ENCODE measurements at regions of chr2 and their contacts with region 1.

Region 1: DNA sequence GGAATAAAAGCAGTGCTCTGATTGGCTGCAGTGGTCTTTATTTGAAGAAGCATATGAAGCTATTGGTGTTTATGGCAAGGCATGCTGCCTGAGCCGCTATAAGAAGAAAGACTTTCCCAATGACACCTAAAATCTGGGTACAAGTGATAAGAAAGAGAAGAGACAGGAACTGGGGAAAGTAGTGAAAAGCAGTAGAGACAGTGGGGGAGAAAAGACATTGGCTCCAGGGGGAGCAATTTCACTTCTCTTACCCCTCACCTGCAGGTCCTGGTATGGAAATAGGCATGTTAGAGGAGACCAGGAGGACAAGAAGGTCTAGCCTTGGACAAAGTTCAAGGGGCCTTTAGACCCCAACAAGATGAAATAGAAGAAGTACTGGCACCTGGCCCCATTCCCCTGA is 47.1 kb downstream of the PLCL1 start:
- DNase-seq: peak; percentile 52
- H3K4me3 Mint-ChIP-seq: no peak overlapping the region
- H3K27ac Mint-ChIP-seq: no peak overlapping the region
- H3K4me1 Mint-ChIP-seq: peaks cover 89% of the 10 kb centered on the region
- H3K27me3 Mint-ChIP-seq: no peaks in the 10 kb centered on the region

Region 2: GRCh38 chr2:197740200-197740599 is 111.3 kb before region 1 on chr2:
- CTCF ChIA-PET with region 1: no interaction called
- intact Hi-C with region 1: no loop called
- DNase-seq: no peak
- H3K4me3 Mint-ChIP-seq: no peak overlapping the region
- H3K27ac Mint-ChIP-seq: no peak overlapping the region
- H3K4me1 Mint-ChIP-seq: no peaks in the 10 kb centered on the region
- H3K27me3 Mint-ChIP-seq: peaks cover 6% of the 10 kb centered on the region

Region 3: GRCh38 chr2:197804049-197804757 is 47.2 kb before region 1 on chr2 and contains the start of gene PLCL1:
- CTCF ChIA-PET with region 1: interaction called, 5 read pairs
- intact Hi-C with region 1: loop called (anchors 1 kb)
- DNase-seq: peak; percentile 96
- H3K4me3 Mint-ChIP-seq: peak within 1 kb of the TSS; percentile 94
- H3K27ac Mint-ChIP-seq: peak within 1 kb of the TSS; percentile 75
- H3K4me1 Mint-ChIP-seq: peaks cover 43% of the 10 kb centered on the region
- H3K27me3 Mint-ChIP-seq: no peaks in the 10 kb centered on the region
- total RNA-seq, gene PLCL1: 3.3 to 3.5 TPM

Region 4: DNA sequence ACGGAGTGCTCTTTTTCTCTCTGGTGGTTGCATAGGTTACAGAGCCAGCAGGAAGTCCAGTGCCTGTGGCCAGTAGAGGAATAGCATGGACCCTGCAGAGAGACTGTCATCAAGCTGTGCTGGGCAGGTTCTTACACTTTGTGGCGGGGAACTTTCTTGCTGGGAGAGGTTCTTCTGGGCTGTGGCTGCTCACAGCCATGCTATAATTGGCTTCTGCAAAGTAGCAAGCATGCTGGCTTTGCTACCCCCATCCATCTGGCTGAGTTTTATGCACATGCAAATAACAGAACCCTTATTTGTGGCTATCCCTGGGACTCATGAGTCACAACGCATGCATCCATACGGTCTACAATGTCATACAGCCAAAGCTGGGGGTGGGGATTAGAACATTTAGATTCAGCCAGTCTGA is 21.8 kb after region 1 on chr2:
- CTCF ChIA-PET with region 1: interaction called, 13 read pairs
- intact Hi-C with region 1: loop called (anchors 1 kb)
- DNase-seq: no peak
- H3K4me3 Mint-ChIP-seq: no peak overlapping the region
- H3K27ac Mint-ChIP-seq: no peak overlapping the region
- H3K4me1 Mint-ChIP-seq: peaks cover 65% of the 10 kb centered on the region
- H3K27me3 Mint-ChIP-seq: no peaks in the 10 kb centered on the region

Region 5: GRCh38 chr2:197986977-197987376 is 135.5 kb after region 1 on chr2:
- CTCF ChIA-PET with region 1: interaction called, 6 read pairs
- intact Hi-C with region 1: loop called (anchors 1 kb)
- DNase-seq: no peak
- H3K4me3 Mint-ChIP-seq: no peak overlapping the region
- H3K27ac Mint-ChIP-seq: no peak overlapping the region
- H3K4me1 Mint-ChIP-seq: peaks cover 35% of the 10 kb centered on the region
- H3K27me3 Mint-ChIP-seq: no peaks in the 10 kb centered on the region

Region 6: DNA sequence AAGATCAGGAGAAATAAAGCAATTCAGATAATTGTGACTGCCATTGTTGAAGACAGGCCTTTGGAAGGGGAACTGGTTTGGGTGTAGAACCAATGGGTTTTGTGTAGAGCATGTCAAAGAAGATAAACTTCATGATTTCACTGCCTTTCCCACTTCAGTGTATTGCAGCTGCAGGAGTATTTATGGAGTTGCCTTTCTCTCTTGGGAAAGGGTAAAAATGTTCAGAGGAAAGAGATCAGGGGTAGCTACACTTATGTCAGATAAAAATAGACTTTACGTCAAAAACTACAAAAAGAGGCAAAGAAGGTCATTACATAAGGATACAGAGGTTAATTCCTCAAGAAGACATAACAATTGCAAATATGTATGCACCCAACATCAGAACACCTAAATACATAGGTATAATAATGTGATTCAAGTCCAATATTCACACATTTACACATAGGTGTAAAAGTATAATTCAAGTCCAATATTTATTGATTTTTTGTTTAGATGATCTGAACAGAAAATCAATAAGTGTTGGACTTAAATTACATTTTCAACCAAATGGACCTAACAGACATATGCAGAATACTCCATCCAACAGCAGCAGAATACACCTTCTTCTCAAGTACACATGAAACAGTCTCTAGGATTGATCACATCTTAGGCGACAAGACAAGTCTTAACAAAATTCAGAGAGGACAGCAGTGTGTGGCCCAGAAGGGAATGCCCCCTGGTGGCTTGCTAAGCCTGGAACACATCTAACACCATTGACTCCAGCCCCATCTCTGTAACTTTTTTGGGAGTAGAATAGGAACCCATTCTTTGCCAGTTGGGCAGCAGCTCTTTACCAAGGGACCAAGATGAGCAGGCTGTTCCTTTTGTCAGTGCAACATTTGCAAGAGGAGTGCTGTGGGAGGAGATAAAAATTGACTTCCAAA is 202.6 kb after region 1 on chr2:
- CTCF ChIA-PET with region 1: interaction called, 10 read pairs
- intact Hi-C with region 1: loop called (anchors 1 kb)
- DNase-seq: peak; percentile 71
- H3K4me3 Mint-ChIP-seq: no peak overlapping the region
- H3K27ac Mint-ChIP-seq: no peak overlapping the region
- H3K4me1 Mint-ChIP-seq: peaks cover 27% of the 10 kb centered on the region
- H3K27me3 Mint-ChIP-seq: no peaks in the 10 kb centered on the region

Region 7: DNA sequence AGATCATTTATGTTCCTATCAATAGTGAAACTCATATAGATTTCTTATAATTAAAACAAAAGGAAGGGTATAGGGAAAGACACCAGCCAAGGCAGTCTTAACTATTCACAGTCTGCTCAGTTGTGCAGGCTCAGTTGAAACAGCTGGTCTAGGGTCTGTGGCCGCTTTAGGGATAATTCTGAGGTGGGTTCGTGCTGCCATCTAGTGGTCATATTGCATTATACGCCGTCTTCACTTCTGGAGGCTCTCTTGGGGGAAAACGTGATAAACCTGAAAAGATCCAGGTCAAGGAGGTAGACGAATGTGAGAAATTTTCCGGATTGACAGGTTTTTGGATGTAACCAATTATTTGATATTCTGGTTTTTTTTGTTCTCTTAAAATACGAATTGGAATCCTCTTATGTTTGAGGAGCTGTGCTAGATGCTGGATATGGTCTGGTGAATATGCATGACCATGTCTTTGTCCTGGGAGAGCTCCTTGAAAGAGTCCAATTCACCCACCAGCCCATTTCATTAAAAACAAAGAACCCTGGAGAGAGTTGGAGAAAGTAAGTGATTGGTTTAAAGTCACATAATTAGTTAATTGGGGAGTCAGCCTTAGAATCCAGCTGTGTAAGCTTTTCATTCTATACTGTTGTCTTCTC is 445.3 kb after region 1 on chr2:
- CTCF ChIA-PET with region 1: no interaction called
- intact Hi-C with region 1: loop called (anchors 2 kb)
- DNase-seq: peak; percentile 73
- H3K4me3 Mint-ChIP-seq: no peak overlapping the region
- H3K27ac Mint-ChIP-seq: no peak overlapping the region
- H3K4me1 Mint-ChIP-seq: no peaks in the 10 kb centered on the region
- H3K27me3 Mint-ChIP-seq: peaks cover 7% of the 10 kb centered on the region